ENCODE measurements at regions of chr9 and their contacts with region 1.

Region 1: GRCh38 chr9:74554751-74555419 is 57.8 kb downstream of the RORB start:
- DNase-seq: no peak
- H3K4me3 ChIP-seq: no peak overlapping the region
- H3K27ac ChIP-seq: no peak overlapping the region
- H3K4me1 ChIP-seq: no peaks in the 10 kb centered on the region
- H3K27me3 ChIP-seq: no peaks in the 10 kb centered on the region
- CTCF ChIP-seq: no peak
- POLR2A ChIP-seq: no peak

Region 2: DNA sequence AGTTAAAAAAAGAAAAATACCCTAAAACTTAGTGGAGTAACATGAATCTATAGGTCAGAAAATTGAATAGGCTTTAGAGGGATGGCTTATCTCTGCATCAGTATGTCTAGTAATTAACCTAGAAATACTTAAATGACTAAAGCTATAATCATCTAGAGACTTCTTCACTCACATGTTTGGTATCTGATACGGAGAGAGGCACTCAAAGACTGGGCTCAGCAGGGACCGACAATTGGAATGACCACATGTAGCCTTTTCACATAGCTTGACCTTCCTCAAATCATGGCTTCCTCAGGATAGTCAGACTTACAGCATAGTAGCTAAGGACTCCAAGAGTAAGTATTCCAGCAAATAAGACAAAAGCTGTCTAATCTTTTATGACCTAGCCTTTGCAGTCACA is 163.1 kb before region 1 on chr9:
- intact Hi-C with region 1: no loop called
- DNase-seq: no peak
- H3K4me3 ChIP-seq: no peak overlapping the region
- H3K27ac ChIP-seq: no peak overlapping the region
- H3K4me1 ChIP-seq: no peaks in the 10 kb centered on the region
- H3K27me3 ChIP-seq: no peaks in the 10 kb centered on the region
- CTCF ChIP-seq: no peak
- POLR2A ChIP-seq: no peak

Region 3: GRCh38 chr9:74528207-74528606 is 26.7 kb before region 1 on chr9:
- intact Hi-C with region 1: loop called (anchors 2 kb)
- DNase-seq: no peak
- H3K4me3 ChIP-seq: no peak overlapping the region
- H3K27ac ChIP-seq: no peak overlapping the region
- H3K4me1 ChIP-seq: no peaks in the 10 kb centered on the region
- H3K27me3 ChIP-seq: no peaks in the 10 kb centered on the region
- CTCF ChIP-seq: no peak
- POLR2A ChIP-seq: no peak

Measured in prostate gland (tissue), 2 donors.